A673 (cell line): ENCODE measurements at regions of chr18 and their contacts with region 1.

Region 1: DNA sequence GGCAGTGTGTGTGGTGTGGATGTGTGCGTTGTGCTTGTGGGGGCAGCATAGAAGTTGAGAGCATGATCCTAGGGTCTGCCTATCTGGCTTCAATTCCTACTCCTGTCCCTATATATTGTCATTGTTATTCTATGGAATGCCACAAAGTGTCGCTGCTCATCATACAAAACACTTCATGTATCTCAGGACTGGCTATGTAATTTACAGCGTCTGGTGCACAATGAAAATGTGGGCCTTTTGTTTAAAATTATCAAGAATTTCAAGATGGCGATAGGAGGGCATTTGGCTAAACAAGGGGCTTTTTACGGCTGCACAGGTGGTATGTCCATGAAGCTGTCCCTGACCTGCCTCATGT is 3.4 kb downstream of the SERPINB2 start:
- DNase-seq: peak; percentile 75
- H3K4me3 ChIP-seq: no peak overlapping the region
- H3K27ac ChIP-seq: no peak overlapping the region
- H3K4me1 ChIP-seq: no peaks in the 10 kb centered on the region
- H3K27me3 ChIP-seq: no peaks in the 10 kb centered on the region
- CTCF ChIP-seq: peak; percentile 68

Region 2: GRCh38 chr18:63741769-63742168 is 149.2 kb before region 1 on chr18:
- CTCF ChIA-PET with region 1: no interaction called
- POLR2A ChIA-PET with region 1: no interaction called
- intact Hi-C with region 1: no loop called
- DNase-seq: peak; percentile 71
- H3K4me3 ChIP-seq: no peak overlapping the region
- H3K27ac ChIP-seq: no peak overlapping the region
- H3K4me1 ChIP-seq: no peaks in the 10 kb centered on the region
- H3K27me3 ChIP-seq: no peaks in the 10 kb centered on the region
- CTCF ChIP-seq: peak; percentile 77

Region 3: GRCh38 chr18:63936156-63936931 is 45.4 kb after region 1 on chr18:
- CTCF ChIA-PET with region 1: interaction called, 7 read pairs
- POLR2A ChIA-PET with region 1: no interaction called
- intact Hi-C with region 1: loop called (anchors 2 kb)
- DNase-seq: peak; percentile 74
- H3K4me3 ChIP-seq: peak overlapping the region; percentile 60
- H3K27ac ChIP-seq: no peak overlapping the region
- H3K4me1 ChIP-seq: peaks cover 5% of the 10 kb centered on the region
- H3K27me3 ChIP-seq: no peaks in the 10 kb centered on the region
- CTCF ChIP-seq: peak; percentile 82

Region 4: GRCh38 chr18:63979409-63979920 is 88.5 kb after region 1 on chr18:
- CTCF ChIA-PET with region 1: no interaction called
- POLR2A ChIA-PET with region 1: no interaction called
- intact Hi-C with region 1: loop called (anchors 1 kb)
- DNase-seq: peak; percentile 81
- H3K4me3 ChIP-seq: peak overlapping the region; percentile 9
- H3K27ac ChIP-seq: no peak overlapping the region
- H3K4me1 ChIP-seq: no peaks in the 10 kb centered on the region
- H3K27me3 ChIP-seq: no peaks in the 10 kb centered on the region
- CTCF ChIP-seq: peak; percentile 92

Region 5: DNA sequence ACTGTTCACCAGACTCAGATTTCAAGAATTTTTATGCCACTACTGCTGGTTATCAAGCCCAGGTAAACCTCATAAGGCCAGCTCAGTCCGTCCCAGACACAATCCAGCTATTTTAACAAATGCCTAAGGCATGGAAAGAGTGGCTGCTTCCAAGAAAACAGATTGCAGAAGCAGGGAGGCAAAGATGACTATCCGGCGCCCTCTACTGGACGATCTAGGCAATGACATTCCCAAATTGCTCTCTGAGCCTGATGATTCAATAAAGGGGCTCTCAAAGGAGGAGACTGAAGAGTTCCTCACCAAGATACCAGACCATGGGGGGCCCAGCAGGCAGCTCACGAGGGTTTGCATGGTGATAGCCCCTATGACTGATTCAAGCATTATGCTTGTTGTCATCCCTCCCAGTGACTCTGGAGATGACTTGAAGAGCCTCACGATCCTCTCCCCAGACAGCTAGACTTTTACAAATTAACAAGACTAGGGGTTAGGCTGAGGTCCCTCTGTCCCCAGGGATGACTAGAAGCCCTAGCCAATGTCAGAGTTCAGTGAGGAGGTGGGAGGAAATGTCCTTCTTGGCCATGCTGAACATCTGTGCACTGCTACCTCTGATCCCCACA is 104.0 kb after region 1 on chr18:
- CTCF ChIA-PET with region 1: no interaction called
- POLR2A ChIA-PET with region 1: no interaction called
- intact Hi-C with region 1: loop called (anchors 1 kb)
- DNase-seq: peak; percentile 71
- H3K4me3 ChIP-seq: no peak overlapping the region
- H3K27ac ChIP-seq: no peak overlapping the region
- H3K4me1 ChIP-seq: no peaks in the 10 kb centered on the region
- H3K27me3 ChIP-seq: no peaks in the 10 kb centered on the region
- CTCF ChIP-seq: peak; percentile 90